BJ (cell line): ENCODE measurements at regions of chr1 and their contacts with region 1.

Region 1: DNA sequence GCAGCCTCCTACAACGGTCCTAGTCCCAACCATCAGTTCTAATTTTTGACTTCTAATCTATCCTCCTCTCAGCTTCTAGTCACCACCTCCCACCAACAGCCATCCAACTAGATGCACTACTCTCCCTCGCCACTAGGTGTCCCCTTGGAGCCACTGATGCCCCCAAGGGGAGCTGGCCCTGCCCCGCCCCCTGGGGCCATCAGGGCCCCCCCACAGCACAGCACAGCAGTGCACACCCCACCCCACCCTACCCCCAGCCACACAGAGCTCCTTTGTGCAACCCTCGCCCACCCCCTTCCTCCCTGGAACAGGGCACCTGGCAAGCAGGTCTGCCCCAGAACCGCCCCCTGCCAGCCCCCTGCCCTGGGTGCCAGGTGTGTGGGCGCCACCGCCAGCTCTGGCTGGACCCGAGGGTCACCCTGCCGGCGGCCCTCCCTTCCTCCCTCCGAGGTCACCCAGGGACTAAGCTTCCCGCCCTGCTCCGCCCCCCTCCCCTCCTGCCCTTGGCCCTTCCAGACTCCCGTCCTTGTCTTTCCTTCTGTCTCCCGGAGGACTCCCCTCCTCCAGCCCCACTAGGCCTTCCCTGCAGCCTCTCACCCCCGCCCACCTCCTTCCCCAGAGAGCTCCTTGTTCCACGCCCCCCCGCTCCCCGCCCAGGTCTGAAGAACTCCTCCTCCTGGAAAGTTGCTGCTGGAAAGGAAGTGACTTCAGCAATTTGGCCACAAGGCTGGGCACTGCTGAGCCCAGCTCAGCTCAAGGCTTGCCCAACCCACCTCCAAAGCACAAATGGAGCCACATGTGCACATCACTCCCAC is 47.0 kb downstream of the AHDC1 start:
- DNase-seq: no peak
- H3K4me3 ChIP-seq: peak overlapping the region; percentile 10; the same call in 1 of the 2 replicates
- H3K27me3 ChIP-seq: no peaks in the 10 kb centered on the region
- CTCF ChIP-seq: peak; percentile 94

Region 2: GRCh38 chr1:27416387-27417111 is 140.4 kb before region 1 on chr1:
- CTCF ChIA-PET with region 1: interaction called, 16 read pairs
- POLR2A ChIA-PET with region 1: no interaction called
- DNase-seq: no peak
- H3K4me3 ChIP-seq: no peak overlapping the region
- H3K27me3 ChIP-seq: no peaks in the 10 kb centered on the region
- CTCF ChIP-seq: peak; percentile 80

Region 3: DNA sequence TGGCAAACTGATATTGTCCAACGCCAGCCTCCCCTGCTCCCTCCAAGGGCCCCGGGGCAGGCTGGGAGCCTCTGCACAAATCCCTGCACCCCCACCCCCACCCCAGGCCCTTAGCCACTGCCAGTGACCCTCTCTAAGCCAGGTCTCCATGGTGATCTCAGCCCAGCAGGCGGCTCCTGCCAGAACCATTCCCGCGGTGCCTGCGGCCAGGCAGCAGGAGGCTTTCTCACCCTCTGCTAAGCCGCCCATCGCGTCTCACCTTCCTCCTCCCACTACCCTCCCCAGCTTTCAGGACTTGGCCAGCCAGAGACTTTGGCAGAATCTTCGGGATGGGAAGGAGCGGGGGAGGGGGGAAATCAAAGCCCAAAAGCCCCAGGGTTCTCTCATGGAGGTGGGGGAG is 20.2 kb before region 1 on chr1:
- CTCF ChIA-PET with region 1: interaction called, 105 read pairs
- POLR2A ChIA-PET with region 1: no interaction called
- DNase-seq: no peak
- H3K4me3 ChIP-seq: no peak overlapping the region
- H3K27me3 ChIP-seq: no peaks in the 10 kb centered on the region
- CTCF ChIP-seq: peak; percentile 30

Region 4: GRCh38 chr1:27568300-27569087 is 11.5 kb after region 1 on chr1:
- CTCF ChIA-PET with region 1: interaction called, 54 read pairs
- POLR2A ChIA-PET with region 1: no interaction called
- DNase-seq: peak; percentile 60
- H3K4me3 ChIP-seq: peak overlapping the region; percentile 17
- H3K27me3 ChIP-seq: no peaks in the 10 kb centered on the region
- CTCF ChIP-seq: peak; percentile 47; the same call in 1 of the 2 replicates

Region 5: GRCh38 chr1:27574871-27575831 is 18.2 kb after region 1 on chr1:
- CTCF ChIA-PET with region 1: interaction called, 54 read pairs
- POLR2A ChIA-PET with region 1: interaction called, 12 read pairs
- DNase-seq: no peak
- H3K4me3 ChIP-seq: peak overlapping the region; percentile 32
- H3K27me3 ChIP-seq: no peaks in the 10 kb centered on the region
- CTCF ChIP-seq: peak; percentile 23; the same call in 1 of the 2 replicates

Region 6: GRCh38 chr1:27594562-27595510 is 37.8 kb after region 1 on chr1:
- CTCF ChIA-PET with region 1: interaction called, 238 read pairs
- POLR2A ChIA-PET with region 1: interaction called, 25 read pairs
- DNase-seq: peak; percentile 60
- H3K4me3 ChIP-seq: no peak overlapping the region
- H3K27me3 ChIP-seq: no peaks in the 10 kb centered on the region
- CTCF ChIP-seq: no peak